ENCODE measurements at regions of chr11 and their contacts with region 1.

Region 1: DNA sequence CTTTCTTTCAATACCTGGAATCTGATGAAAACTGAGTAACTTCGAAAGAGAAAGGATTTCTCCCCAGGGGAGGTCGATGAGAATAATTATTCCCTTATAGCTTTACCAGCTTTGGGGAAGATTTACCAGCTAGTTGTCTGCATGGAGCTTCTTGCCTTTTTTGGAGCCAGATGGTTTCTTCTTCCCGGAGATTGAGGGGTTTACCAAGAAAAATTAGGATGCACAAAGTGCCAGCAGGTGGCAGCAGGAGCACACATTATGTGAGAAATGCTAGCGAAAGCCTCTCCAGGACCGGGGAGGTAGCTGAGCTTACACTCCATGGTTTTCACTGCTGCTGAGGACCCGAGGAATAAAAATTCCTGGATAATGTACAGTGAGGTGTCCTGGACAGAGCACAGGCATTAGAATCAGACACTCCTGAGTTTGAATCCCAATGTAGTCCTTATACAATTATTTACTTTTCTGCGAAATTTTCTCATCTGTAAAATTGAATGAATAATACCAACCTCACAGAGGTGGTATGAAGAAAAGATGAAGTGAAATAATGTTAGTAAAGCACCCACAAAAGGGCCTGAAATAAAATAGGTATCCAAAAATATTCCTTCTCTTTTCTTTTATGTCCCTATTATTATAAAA is 46.0 kb upstream of the PARVA start:
- DNase-seq: peak; percentile 93
- H3K4me3 ChIP-seq: no peak overlapping the region
- H3K27ac ChIP-seq: no peak overlapping the region
- H3K4me1 ChIP-seq: peaks cover 14% of the 10 kb centered on the region
- H3K27me3 ChIP-seq: no peaks in the 10 kb centered on the region

Region 2: DNA sequence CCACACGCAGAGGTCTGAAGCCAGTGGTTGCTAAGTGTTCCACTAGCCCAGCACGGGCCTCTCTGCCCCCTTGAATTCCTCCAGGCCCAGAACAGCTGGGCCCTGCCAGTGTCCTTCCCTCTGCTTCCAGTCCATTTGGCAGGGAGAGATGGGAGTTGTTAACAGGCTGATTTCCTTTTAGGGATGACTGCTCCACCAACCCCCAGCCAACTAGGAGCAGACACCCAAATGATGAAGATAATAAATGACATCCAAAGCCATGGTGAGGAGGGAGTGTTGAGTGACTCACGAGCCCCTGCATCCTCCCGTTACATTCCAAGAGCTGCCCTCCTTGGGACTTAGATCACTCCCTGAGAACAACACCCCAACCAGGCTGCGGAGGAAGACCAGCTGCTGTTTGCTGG is 66.6 kb after region 1 on chr11:
- in situ Hi-C with region 1: no loop called
- DNase-seq: peak; percentile 96
- H3K4me3 ChIP-seq: 0 out of 2 replicates have a peak overlapping the region, but pooled peaks have one; percentile 2
- H3K27ac ChIP-seq: peak overlapping the region; percentile 80
- H3K4me1 ChIP-seq: peaks cover 34% of the 10 kb centered on the region
- H3K27me3 ChIP-seq: no peaks in the 10 kb centered on the region

Region 3: DNA sequence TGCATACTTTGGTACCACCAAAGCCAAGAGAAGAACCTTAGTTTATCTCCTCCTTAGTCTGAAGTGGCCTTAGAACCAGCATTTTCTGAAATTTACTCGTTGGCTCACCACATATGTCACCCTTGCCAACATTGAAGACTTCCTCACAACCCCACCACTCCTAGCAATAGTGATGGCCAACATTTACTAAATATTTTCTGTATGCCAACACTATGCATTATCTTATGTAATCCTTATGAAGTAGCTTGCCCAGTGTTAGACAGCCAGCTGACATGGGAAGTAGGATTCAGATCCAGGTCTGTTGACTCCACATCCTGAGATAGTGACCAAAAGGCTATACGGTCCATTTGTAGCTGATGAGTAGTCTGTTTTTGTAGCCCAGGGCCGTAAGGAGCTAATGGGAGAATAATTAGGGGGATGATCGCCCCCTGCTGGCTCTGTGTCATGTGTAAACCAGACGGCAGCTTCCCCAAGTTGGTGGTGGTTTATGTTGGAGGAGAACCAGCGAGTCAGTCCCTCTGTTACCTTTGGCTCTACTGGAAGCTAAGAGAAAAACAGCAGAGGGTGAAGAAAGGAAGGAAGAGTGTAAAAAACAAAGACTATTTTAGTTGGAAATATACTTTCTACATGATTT is 557.3 kb after region 1 on chr11:
- in situ Hi-C with region 1: loop called (anchors 25 kb)
- DNase-seq: peak; percentile 92
- H3K4me3 ChIP-seq: peak overlapping the region; percentile 44
- H3K27ac ChIP-seq: peak overlapping the region; percentile 97
- H3K4me1 ChIP-seq: peaks cover 35% of the 10 kb centered on the region
- H3K27me3 ChIP-seq: no peaks in the 10 kb centered on the region

Measured in GM23248 (cell line).